T-cell (primary cell): ENCODE measurements at regions of chr10 and their contacts with region 1.

Region 1: GRCh38 chr10:80459047-80459931 is 5.2 kb downstream of the TSPAN14 start:
- DNase-seq: peak; percentile 37 to 80 (median 63)
- ATAC-seq: peak; percentile 56 to 61 (median 60)
- H3K4me3 ChIP-seq: peak overlapping the region; percentile 63 to 82
- H3K4me3 Mint-ChIP-seq: peak overlapping the region in 2 of 3 donors; percentile 98 to 99
- H3K27ac ChIP-seq: peak overlapping the region; percentile 82
- H3K27ac Mint-ChIP-seq: peak overlapping the region; percentile 95 to 99
- H3K4me1 ChIP-seq: peaks cover 44 to 91% of the 10 kb centered on the region in 2 experiments
- H3K4me1 Mint-ChIP-seq: peaks cover 85 to 89% (median 87%) of the 10 kb centered on the region in 3 donors
- H3K27me3 ChIP-seq: no peaks in the 10 kb centered on the region
- H3K27me3 Mint-ChIP-seq: no peaks in the 10 kb centered on the region

Region 2: DNA sequence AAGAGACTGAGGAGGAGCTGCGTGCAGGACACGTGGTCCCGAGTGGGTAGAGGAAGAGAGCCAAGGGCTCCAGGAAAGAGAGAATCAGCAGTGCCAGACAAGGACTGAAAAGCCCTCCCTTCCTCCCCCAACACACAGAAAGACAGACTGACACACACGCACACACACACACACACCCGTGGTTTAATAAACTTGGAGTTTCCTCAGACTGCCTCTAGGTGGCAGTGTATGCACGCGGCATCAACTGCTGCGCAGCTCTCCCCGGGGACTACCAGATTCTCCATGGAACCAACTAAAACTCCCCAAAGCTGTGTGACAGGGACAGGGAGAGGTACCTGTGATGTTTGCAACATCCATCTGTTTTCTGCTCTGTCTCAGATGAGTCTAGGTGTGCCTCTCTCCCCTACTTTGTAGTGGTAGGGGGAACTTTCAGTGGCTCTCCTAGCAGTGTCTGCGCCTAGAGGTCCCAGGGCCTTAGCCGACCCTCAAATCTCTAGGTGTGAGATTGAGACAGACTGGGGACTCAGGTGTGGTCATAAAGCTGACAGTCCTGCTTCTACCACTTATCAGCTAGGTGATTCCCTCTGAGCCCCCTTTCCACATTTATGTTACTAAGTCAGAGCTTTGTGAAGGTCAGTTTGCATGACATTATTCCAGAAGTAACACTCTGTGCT is 14.5 kb before region 1 on chr10:
- CTCF ChIA-PET with region 1: interaction called, 6 to 21 read pairs
- POLR2A ChIA-PET with region 1: interaction called in 1 of 2 experiments, 8 read pairs
- DNase-seq: peak in 17 of 35 experiments; percentile 32 to 85 (median 60)
- ATAC-seq: peak; percentile 78 to 86 (median 82)
- H3K4me3 ChIP-seq: no peak overlapping the region
- H3K4me3 Mint-ChIP-seq: peak overlapping the region in 1 of 3 donors; percentile 66
- H3K27ac ChIP-seq: no peak overlapping the region
- H3K27ac Mint-ChIP-seq: peak overlapping the region; percentile 85 to 89
- H3K4me1 ChIP-seq: peaks cover 12 to 22% of the 10 kb centered on the region in 2 experiments
- H3K4me1 Mint-ChIP-seq: peaks cover 47 to 63% (median 51%) of the 10 kb centered on the region in 3 donors
- H3K27me3 ChIP-seq: no peaks in the 10 kb centered on the region
- H3K27me3 Mint-ChIP-seq: no peaks in the 10 kb centered on the region

Region 3: DNA sequence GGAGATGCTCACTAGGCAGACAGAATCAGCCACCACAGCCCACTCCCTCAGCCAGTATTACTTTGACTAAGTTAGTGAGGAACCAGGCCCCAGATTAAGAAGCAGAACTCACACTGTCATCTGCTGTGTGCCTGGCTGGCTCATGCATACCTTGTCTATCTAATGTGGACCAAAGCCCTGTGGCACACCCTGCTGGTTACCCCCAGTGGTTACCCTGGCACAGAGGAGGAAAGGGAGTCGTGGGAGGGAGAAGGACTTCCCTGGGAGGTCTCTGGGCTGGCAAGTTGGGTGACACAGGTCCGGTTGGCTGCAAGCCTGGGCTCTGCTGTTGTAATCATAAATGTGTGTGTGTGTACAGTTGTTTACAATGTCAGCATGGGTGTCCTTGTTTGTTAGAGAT is 71.0 kb after region 1 on chr10:
- CTCF ChIA-PET with region 1: interaction called, 3 to 10 read pairs
- POLR2A ChIA-PET with region 1: no interaction called
- DNase-seq: peak in 27 of 35 experiments; percentile 20 to 58 (median 34)
- ATAC-seq: peak; percentile 41 to 67 (median 46)
- H3K4me3 ChIP-seq: no peak overlapping the region
- H3K4me3 Mint-ChIP-seq: peak overlapping the region in 2 of 3 donors; percentile 52 to 73
- H3K27ac ChIP-seq: peak overlapping the region; percentile 58
- H3K27ac Mint-ChIP-seq: peak overlapping the region; percentile 95
- H3K4me1 ChIP-seq: peaks cover 54 to 66% of the 10 kb centered on the region in 2 experiments
- H3K4me1 Mint-ChIP-seq: peaks cover 68 to 73% (median 70%) of the 10 kb centered on the region in 3 donors
- H3K27me3 ChIP-seq: no peaks in the 10 kb centered on the region
- H3K27me3 Mint-ChIP-seq: no peaks in the 10 kb centered on the region